ENCODE measurements at regions of chr10 and their contacts with region 1.

Region 1: DNA sequence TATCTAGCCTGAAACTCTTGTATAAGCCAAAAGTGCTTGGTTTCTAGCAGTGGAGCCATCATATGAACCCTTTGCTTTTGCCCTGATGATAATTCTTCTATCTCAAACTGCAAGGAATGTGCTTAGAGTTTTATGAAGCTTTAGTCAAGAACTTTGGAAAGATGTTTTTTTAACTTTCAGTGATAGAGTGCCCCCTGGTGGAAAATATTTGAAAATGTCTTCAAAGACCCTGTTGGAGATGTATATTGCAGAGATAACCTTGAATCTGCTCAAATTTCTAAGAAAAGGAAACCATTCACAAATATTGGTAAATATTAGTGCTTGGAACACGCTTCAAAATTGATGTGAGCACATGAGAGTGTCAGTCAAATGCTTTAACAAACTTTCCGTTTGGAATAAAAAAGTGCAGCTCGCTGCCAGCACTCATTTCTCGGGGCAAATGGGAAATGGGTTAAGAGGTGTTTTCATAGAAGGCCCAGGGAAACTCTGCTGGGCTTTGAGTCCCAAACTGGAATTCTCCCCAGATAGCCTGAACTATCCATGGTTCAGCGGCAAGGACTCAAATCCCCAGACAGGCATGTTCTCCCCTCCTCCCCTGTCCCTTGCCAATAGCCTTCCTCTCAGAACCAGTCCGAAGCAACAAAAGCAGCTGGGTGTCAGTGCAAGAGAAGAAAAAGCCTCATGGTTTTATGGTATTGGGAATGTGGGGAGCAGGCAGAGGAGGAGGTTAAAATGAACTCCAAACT is 129.3 kb downstream of the MYOF start:
- DNase-seq: peak; percentile 46
- H3K4me3 ChIP-seq: no peak overlapping the region
- H3K27ac ChIP-seq: no peak overlapping the region
- H3K4me1 ChIP-seq: peaks cover 2% of the 10 kb centered on the region
- H3K27me3 ChIP-seq: no peaks in the 10 kb centered on the region
- CTCF ChIP-seq: peak; percentile 36 to 46
- POLR2A ChIP-seq: no peak

Region 2: DNA sequence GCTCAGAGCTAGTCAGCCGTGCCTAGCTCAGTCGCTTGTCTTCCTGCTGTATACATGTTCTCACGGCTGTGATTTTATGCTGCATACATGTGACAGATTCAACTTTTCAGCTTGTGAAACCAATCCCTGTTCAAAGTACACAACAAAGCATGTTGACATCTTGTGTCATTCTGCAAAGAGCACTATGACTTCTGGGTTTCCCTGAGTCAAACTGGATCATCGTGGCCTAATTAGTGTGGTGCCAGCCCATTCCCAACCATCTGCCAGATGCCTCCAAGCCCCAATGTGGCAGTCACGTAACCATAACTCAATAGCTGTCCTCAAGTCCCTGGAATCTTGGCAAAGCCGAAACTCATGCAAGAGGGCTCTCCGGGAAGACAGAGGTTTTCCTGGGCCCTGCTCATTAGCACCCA is 15.5 kb before region 1 on chr10:
- CTCF ChIA-PET with region 1: interaction called, 14 read pairs
- POLR2A ChIA-PET with region 1: no interaction called
- dilution Hi-C with region 1: no loop called
- intact Hi-C with region 1: no loop called
- DNase-seq: no peak
- H3K4me3 ChIP-seq: no peak overlapping the region
- H3K27ac ChIP-seq: no peak overlapping the region
- H3K4me1 ChIP-seq: no peaks in the 10 kb centered on the region
- H3K27me3 ChIP-seq: no peaks in the 10 kb centered on the region
- CTCF ChIP-seq: no peak
- POLR2A ChIP-seq: no peak

Region 3: DNA sequence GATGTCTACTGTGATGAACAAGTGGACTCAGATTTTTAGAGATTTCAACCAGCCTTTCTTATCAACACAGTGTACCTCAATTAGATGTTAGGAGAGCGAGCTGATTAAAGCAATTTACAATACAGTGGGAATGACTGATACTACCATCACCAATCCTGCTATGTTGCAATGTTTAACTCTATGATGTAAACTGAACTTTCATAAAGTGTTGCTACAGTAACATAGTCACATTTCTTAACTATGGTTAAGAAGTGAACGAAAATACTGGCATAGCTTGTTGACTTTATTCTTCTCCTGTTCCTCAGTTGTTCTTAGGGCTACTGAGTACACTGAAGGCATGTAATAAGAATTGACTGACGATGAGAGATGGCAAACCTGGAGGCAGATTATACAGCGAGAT is 10.4 kb before region 1 on chr10:
- CTCF ChIA-PET with region 1: interaction called, 14 read pairs
- POLR2A ChIA-PET with region 1: no interaction called
- dilution Hi-C with region 1: no loop called
- intact Hi-C with region 1: no loop called
- DNase-seq: no peak
- H3K4me3 ChIP-seq: no peak overlapping the region
- H3K27ac ChIP-seq: no peak overlapping the region
- H3K4me1 ChIP-seq: peaks cover 8% of the 10 kb centered on the region
- H3K27me3 ChIP-seq: no peaks in the 10 kb centered on the region
- CTCF ChIP-seq: no peak
- POLR2A ChIP-seq: no peak

Region 4: GRCh38 chr10:93363891-93364648 is 11.3 kb after region 1 on chr10:
- CTCF ChIA-PET with region 1: interaction called, 11 read pairs
- POLR2A ChIA-PET with region 1: no interaction called
- dilution Hi-C with region 1: no loop called
- intact Hi-C with region 1: no loop called
- DNase-seq: no peak
- H3K4me3 ChIP-seq: no peak overlapping the region
- H3K27ac ChIP-seq: no peak overlapping the region
- H3K4me1 ChIP-seq: peaks cover 18% of the 10 kb centered on the region
- H3K27me3 ChIP-seq: no peaks in the 10 kb centered on the region
- CTCF ChIP-seq: no peak
- POLR2A ChIP-seq: no peak

Measured in endothelial cell of umbilical vein (primary cell).